Prostate gland (tissue), 2 donors: ENCODE measurements at regions of chr2 and their contacts with region 1.

Region 1: DNA sequence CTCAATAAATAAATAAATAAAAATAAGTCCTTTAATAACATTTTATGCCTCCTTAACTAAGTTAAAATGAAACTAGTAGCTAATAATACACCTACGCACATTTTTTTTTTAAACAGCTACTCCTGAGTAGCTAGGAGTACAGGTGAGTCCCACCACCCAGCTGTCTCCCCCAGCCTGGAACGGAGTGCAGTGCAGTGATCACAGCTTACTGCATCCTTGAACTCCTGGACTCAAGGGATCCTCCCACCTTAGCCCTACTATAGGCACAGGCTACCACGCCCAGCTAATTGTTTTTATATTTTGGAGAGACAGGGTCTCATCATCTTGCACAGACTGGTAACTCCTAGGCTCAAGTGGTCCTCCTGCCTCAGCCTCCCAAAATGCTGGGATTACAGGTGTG is 28.4 kb downstream of the YWHAQ start:
- DNase-seq: no peak
- H3K4me3 ChIP-seq: no peak overlapping the region
- H3K27ac ChIP-seq: no peak overlapping the region
- H3K4me1 ChIP-seq: no peaks in the 10 kb centered on the region
- H3K27me3 ChIP-seq: no peaks in the 10 kb centered on the region
- CTCF ChIP-seq: no peak
- POLR2A ChIP-seq: no peak

Region 2: GRCh38 chr2:9565436-9566153 is 36.8 kb before region 1 on chr2:
- intact Hi-C with region 1: loop called (anchors 2 kb)
- DNase-seq: peak; percentile 54
- H3K4me3 ChIP-seq: no peak overlapping the region
- H3K27ac ChIP-seq: peak overlapping the region; percentile 57 to 74
- H3K4me1 ChIP-seq: no peaks in the 10 kb centered on the region
- H3K27me3 ChIP-seq: no peaks in the 10 kb centered on the region
- CTCF ChIP-seq: no peak
- POLR2A ChIP-seq: peak; percentile 39